Heart left ventricle (tissue), 16 donors: ENCODE measurements at regions of chr18 and their contacts with region 1.

Region 1: DNA sequence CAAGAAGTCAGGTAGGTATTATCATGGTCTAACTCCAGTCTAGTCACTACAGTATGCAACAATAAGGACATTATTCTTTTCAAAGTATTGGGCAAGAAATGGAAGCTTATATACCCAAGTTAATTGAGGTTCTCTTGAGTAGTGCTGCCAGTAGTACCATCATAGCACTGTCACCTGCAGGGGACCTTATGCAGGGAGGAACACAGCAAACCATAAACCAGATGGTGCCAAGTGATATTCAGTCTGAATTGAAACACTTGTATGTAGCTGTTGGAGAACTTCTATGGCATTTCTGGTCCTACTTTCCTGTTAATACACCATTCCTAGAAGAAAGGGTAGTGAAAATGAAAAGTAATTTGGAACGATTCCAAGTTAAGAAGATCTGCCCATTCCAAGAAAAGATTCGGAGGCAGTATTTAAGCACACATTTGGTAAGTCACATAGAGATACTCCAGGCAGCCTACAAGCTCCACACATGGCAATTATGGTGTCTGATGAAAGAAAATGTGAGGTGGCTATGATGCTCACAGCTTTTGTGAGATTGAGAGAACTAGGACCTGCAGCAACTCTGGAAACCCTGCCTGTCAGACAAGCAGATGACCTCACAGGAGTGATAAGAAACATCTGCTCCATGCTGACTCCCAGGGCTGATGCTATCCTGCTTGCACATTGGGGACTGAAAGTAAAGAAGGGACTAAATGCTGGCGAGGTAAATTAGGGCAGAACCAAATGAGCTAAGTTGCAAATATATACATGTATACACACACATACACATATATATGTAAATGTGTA is 174.7 kb downstream of the MC4R start:
- DNase-seq: no peak
- ATAC-seq: peak in 1 of 4 donors; percentile 36
- H3K4me3 ChIP-seq: no peak overlapping the region
- H3K27ac ChIP-seq: no peak overlapping the region
- H3K4me1 ChIP-seq: no peaks in the 10 kb centered on the region
- H3K27me3 ChIP-seq: no peaks in the 10 kb centered on the region
- CTCF ChIP-seq: no peak
- POLR2A ChIP-seq: no peak

Region 2: DNA sequence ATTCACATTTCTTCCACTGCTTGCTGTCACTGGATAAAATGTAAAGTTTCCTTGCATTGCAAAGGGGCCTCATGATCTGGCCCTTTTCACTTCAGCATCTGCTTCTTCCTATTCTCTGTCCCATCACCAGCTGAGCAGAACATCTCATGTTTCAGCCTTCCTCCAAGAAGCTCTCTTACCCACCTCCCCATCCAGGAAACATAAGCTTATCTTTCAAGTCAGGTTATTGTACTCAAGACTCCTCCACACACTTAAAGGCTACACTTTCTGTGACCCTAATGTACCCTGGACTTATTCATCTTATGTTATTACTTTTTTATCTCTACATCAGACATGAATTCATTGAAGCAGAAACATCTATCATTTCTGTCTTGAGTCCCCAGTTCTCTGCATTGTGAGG is 67.6 kb before region 1 on chr18:
- intact Hi-C with region 1: loop called in 1 of 10 experiments (anchors 10 kb)
- DNase-seq: no peak
- ATAC-seq: no peak
- H3K4me3 ChIP-seq: no peak overlapping the region
- H3K27ac ChIP-seq: no peak overlapping the region
- H3K4me1 ChIP-seq: no peaks in the 10 kb centered on the region
- H3K27me3 ChIP-seq: no peaks in the 10 kb centered on the region
- CTCF ChIP-seq: no peak
- POLR2A ChIP-seq: no peak

Region 3: GRCh38 chr18:60372596-60372995 is 174.7 kb after region 1 on chr18 and contains the start of gene MC4R:
- intact Hi-C with region 1: no loop called
- DNase-seq: peak in 3 of 5 donors; percentile 13 to 22 (median 20)
- ATAC-seq: peak in 3 of 4 donors; percentile 49 to 90 (median 69)
- H3K4me3 ChIP-seq: peak within 1 kb of the TSS in 3 of 12 donors; percentile 4 to 21 (median 17)
- H3K27ac ChIP-seq: no peak within 1 kb of the TSS
- H3K4me1 ChIP-seq: peaks cover 0 to 5% (median 0%) of the 10 kb centered on the region in 12 donors
- H3K27me3 ChIP-seq: peaks cover 0 to 3% (median 0%) of the 10 kb centered on the region in 9 donors
- CTCF ChIP-seq: no peak
- POLR2A ChIP-seq: no peak
- total RNA-seq, gene MC4R: not detected